HEK293 (cell line): ENCODE measurements at regions of chr17 and their contacts with region 1.

Region 1: GRCh38 chr17:35808962-35809854 is at the start of gene TAF15:
- H3K4me3 ChIP-seq: peak within 1 kb of the TSS; percentile 98
- H3K27ac ChIP-seq: peak within 1 kb of the TSS; percentile 96
- H3K4me1 ChIP-seq: peaks cover 15% of the 10 kb centered on the region
- CTCF ChIP-seq: peak; percentile 88

Region 2: DNA sequence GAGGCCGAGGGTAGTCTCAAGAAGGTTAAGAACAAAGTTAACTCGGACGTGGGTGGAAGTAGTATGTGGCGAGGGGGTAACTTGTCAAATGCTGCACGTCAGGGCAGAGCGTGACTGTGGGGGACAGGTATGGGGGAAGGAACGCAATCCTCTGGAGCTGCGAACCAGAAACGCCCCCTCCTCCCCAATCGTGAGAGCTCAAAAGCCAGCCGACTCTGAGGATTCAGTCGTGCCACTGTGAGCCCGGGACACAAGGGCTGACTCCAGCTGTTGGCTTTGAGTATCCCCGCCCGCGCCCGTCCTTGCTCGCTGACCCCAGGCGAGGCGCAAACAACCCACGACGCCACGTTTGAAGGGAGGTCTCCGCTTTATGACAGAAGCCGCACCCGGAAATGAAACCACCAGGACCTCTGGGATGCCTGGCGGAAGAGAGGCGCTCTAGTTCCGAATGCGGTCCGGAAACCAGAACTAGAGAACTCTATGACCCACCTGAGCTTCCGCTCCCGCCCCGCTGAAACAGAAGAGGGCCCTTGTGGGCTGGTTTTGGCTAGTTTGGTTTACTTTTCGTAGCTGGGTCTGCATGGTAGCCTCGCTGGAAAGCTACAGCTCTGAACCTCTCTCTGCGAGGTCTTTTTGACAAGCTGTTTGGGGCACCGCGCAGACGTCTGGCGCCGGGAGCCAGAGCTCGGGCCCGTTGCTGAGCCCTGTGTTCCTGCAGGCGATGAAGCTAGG is 230.8 kb before region 1 on chr17 and contains the start of gene PEX12:
- CTCF ChIA-PET with region 1: interaction called, 5 read pairs
- POLR2A ChIA-PET with region 1: interaction called, 13 read pairs
- H3K4me3 ChIP-seq: peak within 1 kb of the TSS; percentile 88
- H3K27ac ChIP-seq: peak within 1 kb of the TSS; percentile 91
- H3K4me1 ChIP-seq: peaks cover 5% of the 10 kb centered on the region; the same call in 1 of the 2 replicates
- CTCF ChIP-seq: peak; percentile 39; the same call in 1 of the 2 replicates

Region 3: GRCh38 chr17:35716897-35717465 is 92.2 kb before region 1 on chr17:
- CTCF ChIA-PET with region 1: no interaction called
- POLR2A ChIA-PET with region 1: no interaction called
- H3K4me3 ChIP-seq: no peak overlapping the region
- H3K27ac ChIP-seq: no peak overlapping the region
- H3K4me1 ChIP-seq: peaks cover 10% of the 10 kb centered on the region
- CTCF ChIP-seq: no peak

Region 4: GRCh38 chr17:35747540-35748017 is 61.6 kb before region 1 on chr17:
- CTCF ChIA-PET with region 1: interaction called, 17 read pairs
- POLR2A ChIA-PET with region 1: interaction called, 4 read pairs
- H3K4me3 ChIP-seq: no peak overlapping the region
- H3K27ac ChIP-seq: no peak overlapping the region
- H3K4me1 ChIP-seq: no peaks in the 10 kb centered on the region
- CTCF ChIP-seq: peak; percentile 97

Region 5: DNA sequence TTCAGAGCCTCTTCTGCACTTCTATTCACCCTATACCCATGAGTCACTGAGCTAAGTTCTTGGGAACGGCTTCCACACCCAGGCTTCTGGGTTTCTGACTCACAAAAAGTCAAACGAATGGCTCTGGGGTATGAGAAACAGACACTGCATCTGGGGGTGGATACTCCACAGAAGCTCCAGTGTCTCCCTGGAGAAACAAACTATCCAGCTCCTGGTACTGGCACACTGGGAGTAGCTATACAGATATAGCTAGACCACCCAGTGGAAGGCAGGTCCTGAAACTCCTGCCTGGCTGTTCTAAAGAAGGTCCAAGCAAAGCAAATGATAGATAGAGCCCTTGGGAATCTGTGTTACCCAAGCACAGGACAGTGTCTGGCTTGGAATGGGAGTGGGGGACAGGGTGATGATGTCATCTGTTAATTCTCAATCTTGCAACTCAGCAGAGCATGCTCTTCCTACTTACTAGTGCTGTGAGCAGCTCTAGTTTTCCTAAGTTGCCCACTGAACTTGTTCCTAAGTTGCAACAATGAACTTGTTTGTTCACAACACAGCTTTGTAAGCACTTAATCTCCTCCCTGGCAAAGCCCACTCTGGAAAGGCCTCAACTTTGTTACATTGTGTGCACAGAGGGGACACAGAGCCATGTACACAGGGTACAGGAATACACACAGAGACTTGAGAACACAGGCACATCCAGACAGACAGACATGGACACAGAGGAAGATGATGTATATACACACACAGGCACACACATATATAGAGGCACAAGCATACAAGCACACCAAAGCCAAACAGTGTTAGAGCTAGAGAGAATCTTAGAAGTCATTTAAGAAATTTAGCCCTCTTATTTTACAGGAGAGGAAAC is 20.5 kb before region 1 on chr17:
- CTCF ChIA-PET with region 1: interaction called, 16 read pairs
- POLR2A ChIA-PET with region 1: interaction called, 15 read pairs
- H3K4me3 ChIP-seq: no peak overlapping the region
- H3K27ac ChIP-seq: no peak overlapping the region
- H3K4me1 ChIP-seq: no peaks in the 10 kb centered on the region
- CTCF ChIP-seq: no peak

Region 6: DNA sequence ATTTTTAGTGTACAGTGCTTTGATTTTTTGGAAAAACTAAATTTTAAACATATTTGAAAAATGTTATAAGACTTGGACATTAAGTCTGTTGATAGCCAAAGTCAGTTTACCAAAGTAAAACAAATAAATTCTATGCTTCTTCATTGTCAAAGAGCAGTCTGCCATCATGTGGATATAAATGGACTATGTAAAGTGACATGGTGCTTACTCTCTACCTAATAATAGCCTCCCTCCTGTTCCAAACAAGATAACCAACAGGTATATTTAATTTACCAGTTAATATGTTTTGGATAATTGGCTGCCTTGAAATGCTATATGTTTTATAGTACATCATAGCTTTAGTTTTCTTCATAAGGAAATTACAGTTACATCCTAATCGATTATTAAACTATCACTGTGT is 16.0 kb after region 1 on chr17:
- CTCF ChIA-PET with region 1: interaction called, 26 read pairs
- POLR2A ChIA-PET with region 1: interaction called, 33 read pairs
- H3K4me3 ChIP-seq: no peak overlapping the region
- H3K27ac ChIP-seq: no peak overlapping the region
- H3K4me1 ChIP-seq: no peaks in the 10 kb centered on the region
- CTCF ChIP-seq: no peak